Activated CD4-positive, alpha-beta memory T cell treated with anti-CD3 and anti-CD28 coated beads for 36 hours (primary cell): ENCODE measurements at regions of chrX and their contacts with region 1.

Region 1: DNA sequence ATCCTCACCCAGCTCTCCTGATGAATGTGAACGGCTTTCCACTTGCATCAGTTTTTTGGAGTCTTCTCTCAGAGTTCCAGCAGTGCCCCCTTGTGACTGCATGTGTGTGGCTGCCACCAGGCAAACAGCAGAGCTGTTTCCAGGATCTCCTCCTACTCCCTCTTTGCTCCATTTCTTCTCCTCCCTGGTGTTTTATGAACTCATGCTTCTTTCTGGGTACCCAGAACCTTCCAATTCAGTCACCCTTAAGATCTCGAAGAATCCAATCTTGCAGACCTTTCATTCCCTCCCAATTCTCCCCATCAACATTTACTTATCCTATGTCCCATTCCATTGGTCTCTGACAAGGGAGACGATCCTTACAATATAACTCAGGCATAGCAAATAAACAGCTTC is 6.8 kb upstream of the TCEANC start:
- DNase-seq: peak; percentile 62
- H3K4me3 Mint-ChIP-seq: no peak overlapping the region
- H3K27ac Mint-ChIP-seq: no peak overlapping the region
- H3K4me1 Mint-ChIP-seq: peaks cover 23% of the 10 kb centered on the region
- H3K27me3 Mint-ChIP-seq: no peaks in the 10 kb centered on the region

Region 2: GRCh38 chrX:13506574-13506973 is 139.6 kb before region 1 on chrX:
- CTCF ChIA-PET with region 1: interaction called, 44 read pairs
- POLR2A ChIA-PET with region 1: no interaction called
- intact Hi-C with region 1: loop called (anchors 1 kb)
- DNase-seq: peak; percentile 57
- H3K4me3 Mint-ChIP-seq: no peak overlapping the region
- H3K27ac Mint-ChIP-seq: no peak overlapping the region
- H3K4me1 Mint-ChIP-seq: peaks cover 5% of the 10 kb centered on the region
- H3K27me3 Mint-ChIP-seq: no peaks in the 10 kb centered on the region

Region 3: DNA sequence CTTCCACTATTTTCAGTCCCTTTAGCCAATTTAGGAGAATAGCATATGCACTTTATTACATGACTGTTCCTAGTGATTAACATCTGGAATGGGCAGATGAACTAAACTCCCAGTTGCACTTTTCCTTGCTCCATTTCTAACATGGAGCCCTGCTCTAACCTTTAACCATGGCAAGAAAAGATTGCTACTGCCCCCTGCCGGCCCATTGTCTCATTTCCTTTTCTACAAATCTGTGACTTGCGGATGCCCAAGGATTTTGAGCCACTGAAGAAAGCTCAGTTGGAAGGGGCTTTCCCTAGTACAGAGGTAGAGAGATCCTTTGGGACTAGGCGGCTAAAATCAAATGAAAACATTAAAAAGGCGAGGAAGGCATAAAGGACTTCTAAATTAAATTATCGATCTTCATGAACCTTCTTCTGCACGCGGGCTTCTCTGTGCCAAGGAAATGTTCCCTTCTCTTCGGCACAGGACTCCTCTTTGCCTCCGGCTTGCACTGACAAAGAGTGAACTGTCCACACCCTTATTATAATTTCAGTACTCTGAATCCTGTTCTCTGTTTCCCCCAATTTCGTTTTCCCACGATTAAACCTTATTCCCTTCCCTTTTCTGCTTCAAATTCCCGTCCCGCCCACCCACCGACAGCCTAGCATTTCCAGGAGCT is 882.6 kb after region 1 on chrX:
- CTCF ChIA-PET with region 1: no interaction called
- POLR2A ChIA-PET with region 1: no interaction called
- intact Hi-C with region 1: no loop called
- DNase-seq: peak; percentile 65
- H3K4me3 Mint-ChIP-seq: no peak overlapping the region
- H3K27ac Mint-ChIP-seq: no peak overlapping the region
- H3K4me1 Mint-ChIP-seq: peaks cover 4% of the 10 kb centered on the region
- H3K27me3 Mint-ChIP-seq: peaks cover 2% of the 10 kb centered on the region